ENCODE measurements at regions of chr14 and their contacts with region 1.

Region 1: DNA sequence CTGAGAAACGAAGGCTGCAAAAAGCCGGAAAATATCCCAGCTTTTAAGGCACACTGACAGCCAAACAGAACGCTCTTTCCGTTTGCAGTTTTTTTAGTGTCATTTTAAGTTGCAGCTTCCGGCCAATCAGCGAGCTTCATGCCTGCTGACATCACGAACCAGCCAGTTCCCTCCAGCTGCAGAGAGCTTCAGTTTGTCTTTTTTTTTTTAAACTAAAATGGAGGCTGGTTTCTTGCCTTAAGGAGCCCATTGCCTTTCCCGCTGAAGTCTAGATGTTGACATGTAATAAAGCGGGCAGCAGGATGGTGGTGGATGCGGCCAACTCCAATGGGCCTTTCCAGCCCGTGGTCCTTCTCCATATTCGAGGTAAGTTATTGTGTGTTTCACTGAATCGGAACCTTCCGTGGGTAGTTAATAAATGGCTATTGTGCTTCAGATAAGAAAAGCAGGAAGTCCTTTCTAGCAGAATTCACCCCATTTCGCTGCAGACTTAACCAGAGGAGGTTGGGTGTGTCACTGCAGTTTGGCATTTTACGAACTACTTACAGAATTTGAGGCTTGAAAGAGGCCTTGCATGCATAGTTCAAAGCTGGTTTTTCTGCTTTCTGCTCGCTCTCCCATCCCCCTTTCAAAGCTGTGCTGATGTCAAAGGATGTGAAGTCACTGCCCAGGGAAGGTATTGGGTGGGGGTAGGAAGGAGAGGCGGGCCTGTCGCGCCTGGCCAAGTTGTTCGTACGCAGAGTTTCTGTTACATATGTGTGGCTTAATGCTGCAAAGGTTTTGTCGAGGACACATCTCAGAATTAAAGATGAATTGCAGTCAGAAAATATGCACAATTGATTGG is 48.4 kb downstream of the PPP2R5C start:
- DNase-seq: peak; percentile 66
- ATAC-seq: peak; percentile 91
- H3K4me3 Mint-ChIP-seq: peak overlapping the region; percentile 97
- H3K27ac Mint-ChIP-seq: peak overlapping the region; percentile 99
- H3K4me1 Mint-ChIP-seq: peaks cover 55% of the 10 kb centered on the region
- H3K27me3 Mint-ChIP-seq: no peaks in the 10 kb centered on the region
- CTCF ChIP-seq: no peak

Region 2: DNA sequence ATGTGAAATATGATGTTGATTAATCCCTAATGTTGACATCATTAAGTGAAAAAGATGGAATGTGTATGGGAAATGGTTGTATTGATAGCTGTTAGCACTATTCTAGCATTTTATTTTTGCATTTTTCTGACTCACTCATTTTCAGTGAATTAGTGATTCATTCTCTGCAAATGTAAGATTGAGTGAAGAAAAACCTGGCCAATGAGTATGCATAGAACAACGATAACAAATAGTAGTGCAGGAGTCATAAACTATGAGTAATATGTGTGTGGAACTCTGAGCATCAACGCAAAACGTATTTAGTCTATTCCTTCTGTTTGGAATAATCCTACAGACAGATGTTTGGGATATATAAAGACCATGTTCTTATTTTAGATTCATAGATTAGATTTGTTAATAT is 830.1 kb before region 1 on chr14:
- CTCF ChIA-PET with region 1: no interaction called
- POLR2A ChIA-PET with region 1: no interaction called
- intact Hi-C with region 1: no loop called
- DNase-seq: no peak
- ATAC-seq: no peak
- H3K4me3 Mint-ChIP-seq: no peak overlapping the region
- H3K27ac Mint-ChIP-seq: no peak overlapping the region
- H3K4me1 Mint-ChIP-seq: no peaks in the 10 kb centered on the region
- H3K27me3 Mint-ChIP-seq: no peaks in the 10 kb centered on the region
- CTCF ChIP-seq: no peak

Region 3: DNA sequence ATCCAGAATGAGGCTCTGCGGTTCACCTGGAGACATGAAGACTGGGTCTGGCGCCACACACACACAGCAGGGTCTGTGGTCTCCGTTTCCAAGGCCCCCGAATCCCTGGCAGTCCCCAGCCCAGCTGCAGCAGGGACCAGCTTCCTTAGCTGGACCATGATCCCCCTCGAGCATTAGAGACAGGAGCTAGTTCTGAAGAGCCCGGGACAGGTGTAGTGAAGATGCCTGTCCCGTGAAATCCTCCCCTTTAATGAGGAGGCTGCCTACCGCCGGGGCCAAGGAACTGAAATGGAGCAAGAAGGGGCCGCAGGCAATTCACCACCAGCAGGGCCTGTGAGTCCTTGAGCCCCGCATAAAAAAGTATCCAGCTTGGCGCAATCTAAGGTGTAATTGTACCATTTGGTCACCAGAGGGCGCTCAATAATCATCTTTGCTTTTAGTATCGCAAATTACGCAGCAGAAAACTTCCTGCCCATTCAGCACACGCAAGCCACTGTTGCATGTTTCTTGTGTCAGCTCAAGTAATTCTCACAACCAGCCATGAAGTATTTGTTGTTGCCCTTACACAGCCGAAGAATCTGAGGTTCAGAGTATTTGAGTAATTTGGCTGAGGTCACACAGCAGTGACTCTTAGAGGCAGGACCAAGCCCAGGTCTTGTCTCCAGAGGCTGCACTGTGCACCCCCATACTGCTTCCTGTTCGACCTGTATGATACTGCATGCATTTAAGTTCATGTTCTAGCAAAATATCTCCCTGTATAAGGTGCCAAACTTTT is 102.6 kb before region 1 on chr14:
- CTCF ChIA-PET with region 1: no interaction called
- POLR2A ChIA-PET with region 1: interaction called, 10 read pairs
- intact Hi-C with region 1: no loop called
- DNase-seq: peak; percentile 30
- ATAC-seq: peak; percentile 70
- H3K4me3 Mint-ChIP-seq: peak overlapping the region; percentile 46
- H3K27ac Mint-ChIP-seq: peak overlapping the region; percentile 31
- H3K4me1 Mint-ChIP-seq: peaks cover 22% of the 10 kb centered on the region
- H3K27me3 Mint-ChIP-seq: peaks cover 3% of the 10 kb centered on the region
- CTCF ChIP-seq: peak; percentile 65

Region 4: DNA sequence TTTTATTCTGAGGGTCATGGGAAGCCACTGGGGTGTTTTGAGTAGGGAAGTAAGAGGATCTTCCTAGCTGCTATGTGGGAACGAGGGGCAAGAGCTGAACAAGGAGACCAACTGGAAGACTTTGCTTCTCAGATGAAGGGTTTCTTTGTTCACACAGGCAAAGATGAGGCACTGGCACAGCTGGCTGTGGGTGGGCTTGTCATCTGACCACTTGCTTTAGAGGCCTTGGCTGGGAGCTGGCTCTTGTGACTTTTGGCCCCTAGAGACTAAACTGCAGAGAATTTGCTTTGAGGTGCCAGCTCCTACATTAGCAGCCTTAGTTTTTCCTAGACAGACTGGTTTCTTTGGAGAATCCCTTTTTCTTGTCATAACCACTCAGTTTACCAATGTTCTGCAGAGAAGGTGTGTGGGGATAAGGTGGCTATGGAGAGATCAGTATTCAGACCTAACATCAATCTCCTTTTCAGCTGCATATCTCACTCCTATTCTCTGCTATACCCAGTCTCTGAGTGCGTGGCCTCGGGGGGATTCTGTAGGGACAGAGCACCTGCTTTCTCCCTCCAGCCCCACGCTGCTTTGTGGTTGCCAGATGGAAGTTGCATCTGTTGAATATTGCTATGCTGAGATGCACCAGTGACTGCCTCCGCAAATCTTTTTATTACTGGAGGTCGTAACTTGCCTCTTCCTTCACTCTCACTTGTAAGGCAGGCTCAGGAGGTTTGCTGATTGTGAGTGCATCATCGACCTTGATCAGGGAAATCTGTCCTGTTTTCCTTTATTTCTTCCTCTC is 35.7 kb before region 1 on chr14:
- CTCF ChIA-PET with region 1: interaction called, 22 read pairs
- POLR2A ChIA-PET with region 1: interaction called, 52 read pairs
- intact Hi-C with region 1: loop called (anchors 1 kb)
- DNase-seq: peak; percentile 42
- ATAC-seq: peak; percentile 79
- H3K4me3 Mint-ChIP-seq: peak overlapping the region; percentile 49
- H3K27ac Mint-ChIP-seq: peak overlapping the region; percentile 81
- H3K4me1 Mint-ChIP-seq: peaks cover 58% of the 10 kb centered on the region
- H3K27me3 Mint-ChIP-seq: no peaks in the 10 kb centered on the region
- CTCF ChIP-seq: no peak

Region 5: GRCh38 chr14:101823511-101824120 is 13.7 kb after region 1 on chr14:
- CTCF ChIA-PET with region 1: interaction called, 11 read pairs
- POLR2A ChIA-PET with region 1: interaction called, 313 read pairs
- intact Hi-C with region 1: loop called (anchors 1 kb)
- DNase-seq: no peak
- ATAC-seq: peak; percentile 31
- H3K4me3 Mint-ChIP-seq: peak overlapping the region; percentile 80
- H3K27ac Mint-ChIP-seq: peak overlapping the region; percentile 99
- H3K4me1 Mint-ChIP-seq: peaks cover 91% of the 10 kb centered on the region
- H3K27me3 Mint-ChIP-seq: no peaks in the 10 kb centered on the region
- CTCF ChIP-seq: no peak

Region 6: DNA sequence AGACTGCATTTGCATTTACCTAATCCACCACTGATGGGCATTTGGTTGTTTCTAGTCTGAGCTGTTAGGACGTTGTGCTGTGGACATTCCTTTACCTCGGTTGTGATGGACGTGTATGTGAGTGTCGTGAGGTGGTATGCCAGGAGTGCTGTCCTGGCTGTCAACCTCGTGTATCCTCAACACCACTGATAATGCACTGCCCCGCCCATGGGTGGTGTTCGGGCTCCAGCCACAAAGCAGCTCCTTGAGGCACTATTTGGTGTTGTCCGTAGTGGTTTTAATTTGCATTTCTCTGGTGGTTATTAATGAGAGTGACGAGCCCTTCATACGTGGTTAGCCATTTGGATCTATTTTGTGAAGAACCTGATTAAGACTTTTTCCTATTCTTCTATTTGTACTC is 39.2 kb after region 1 on chr14:
- CTCF ChIA-PET with region 1: interaction called, 6 read pairs
- POLR2A ChIA-PET with region 1: interaction called, 70 read pairs
- intact Hi-C with region 1: no loop called
- DNase-seq: no peak
- ATAC-seq: peak; percentile 67
- H3K4me3 Mint-ChIP-seq: peak overlapping the region; percentile 60
- H3K27ac Mint-ChIP-seq: peak overlapping the region; percentile 38
- H3K4me1 Mint-ChIP-seq: peaks cover 88% of the 10 kb centered on the region
- H3K27me3 Mint-ChIP-seq: no peaks in the 10 kb centered on the region
- CTCF ChIP-seq: no peak